Esophagus muscularis mucosa (tissue), 4 donors: ENCODE measurements at regions of chr10 and their contacts with region 1.

Region 1: DNA sequence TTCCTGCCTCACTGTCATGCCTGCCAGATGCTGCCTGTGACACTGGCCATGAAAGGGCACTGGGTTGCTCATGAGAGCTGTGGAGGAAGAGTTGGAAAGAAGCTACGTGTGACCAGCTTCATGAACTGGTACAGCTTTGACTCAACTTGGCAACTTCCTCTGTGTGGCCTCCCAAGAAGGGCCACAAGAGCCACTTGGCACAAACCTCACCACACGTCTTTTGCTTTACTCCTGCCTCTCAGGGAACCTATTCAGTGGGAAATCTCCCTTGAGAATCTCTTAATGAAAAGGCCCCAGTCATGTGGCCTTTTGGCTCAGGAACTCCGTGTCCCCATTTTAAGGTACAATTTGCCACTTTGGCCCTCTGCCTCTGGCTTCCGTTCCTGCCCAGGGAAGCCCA is 54.5 kb downstream of the FRMD4A start:
- DNase-seq: peak; percentile 81
- H3K4me3 ChIP-seq: no peak overlapping the region
- H3K27ac ChIP-seq: no peak overlapping the region
- H3K4me1 ChIP-seq: no peaks in the 10 kb centered on the region
- H3K27me3 ChIP-seq: no peaks in the 10 kb centered on the region
- CTCF ChIP-seq: no peak
- EP300 ChIP-seq: no peak
- POLR2A ChIP-seq: no peak

Region 2: DNA sequence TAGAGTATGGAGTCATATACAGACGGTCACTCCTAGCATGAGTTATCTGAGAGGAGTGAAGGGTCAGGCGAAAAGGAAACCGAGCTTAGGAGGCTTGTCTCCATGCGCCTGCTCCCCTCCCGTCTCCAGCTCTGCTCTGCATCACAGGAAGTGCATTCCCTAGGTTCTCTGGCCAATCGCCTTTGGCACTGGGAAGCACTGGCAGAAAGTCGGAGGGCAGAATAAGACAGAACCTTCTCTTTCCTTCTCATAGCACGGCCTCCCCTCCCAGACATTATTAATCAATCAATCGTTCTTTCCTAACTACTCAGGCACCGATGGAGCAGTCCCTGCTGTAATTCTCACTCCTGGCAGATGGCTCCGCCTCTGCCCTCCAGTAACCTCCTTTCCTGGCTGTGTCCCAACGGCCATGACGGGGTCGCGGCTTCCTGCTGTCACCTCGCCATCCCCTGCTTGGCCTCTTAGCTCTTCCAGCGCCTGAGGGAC is 122.6 kb before region 1 on chr10:
- intact Hi-C with region 1: no loop called
- DNase-seq: no peak
- H3K4me3 ChIP-seq: peak overlapping the region in 3 of 4 donors; percentile 9 to 39 (median 27)
- H3K27ac ChIP-seq: no peak overlapping the region
- H3K4me1 ChIP-seq: no peaks in the 10 kb centered on the region
- H3K27me3 ChIP-seq: peaks cover 0 to 5% (median 0%) of the 10 kb centered on the region in 4 donors
- CTCF ChIP-seq: no peak
- EP300 ChIP-seq: no peak
- POLR2A ChIP-seq: no peak

Region 3: GRCh38 chr10:14220026-14220425 is 56.2 kb before region 1 on chr10:
- intact Hi-C with region 1: loop called (anchors 5 kb)
- DNase-seq: no peak
- H3K4me3 ChIP-seq: no peak overlapping the region
- H3K27ac ChIP-seq: no peak overlapping the region
- H3K4me1 ChIP-seq: no peaks in the 10 kb centered on the region
- H3K27me3 ChIP-seq: no peaks in the 10 kb centered on the region
- CTCF ChIP-seq: no peak
- EP300 ChIP-seq: no peak
- POLR2A ChIP-seq: no peak